Ovary (tissue), 10 donors: ENCODE measurements at regions of chr6 and their contacts with region 1.

Region 1: DNA sequence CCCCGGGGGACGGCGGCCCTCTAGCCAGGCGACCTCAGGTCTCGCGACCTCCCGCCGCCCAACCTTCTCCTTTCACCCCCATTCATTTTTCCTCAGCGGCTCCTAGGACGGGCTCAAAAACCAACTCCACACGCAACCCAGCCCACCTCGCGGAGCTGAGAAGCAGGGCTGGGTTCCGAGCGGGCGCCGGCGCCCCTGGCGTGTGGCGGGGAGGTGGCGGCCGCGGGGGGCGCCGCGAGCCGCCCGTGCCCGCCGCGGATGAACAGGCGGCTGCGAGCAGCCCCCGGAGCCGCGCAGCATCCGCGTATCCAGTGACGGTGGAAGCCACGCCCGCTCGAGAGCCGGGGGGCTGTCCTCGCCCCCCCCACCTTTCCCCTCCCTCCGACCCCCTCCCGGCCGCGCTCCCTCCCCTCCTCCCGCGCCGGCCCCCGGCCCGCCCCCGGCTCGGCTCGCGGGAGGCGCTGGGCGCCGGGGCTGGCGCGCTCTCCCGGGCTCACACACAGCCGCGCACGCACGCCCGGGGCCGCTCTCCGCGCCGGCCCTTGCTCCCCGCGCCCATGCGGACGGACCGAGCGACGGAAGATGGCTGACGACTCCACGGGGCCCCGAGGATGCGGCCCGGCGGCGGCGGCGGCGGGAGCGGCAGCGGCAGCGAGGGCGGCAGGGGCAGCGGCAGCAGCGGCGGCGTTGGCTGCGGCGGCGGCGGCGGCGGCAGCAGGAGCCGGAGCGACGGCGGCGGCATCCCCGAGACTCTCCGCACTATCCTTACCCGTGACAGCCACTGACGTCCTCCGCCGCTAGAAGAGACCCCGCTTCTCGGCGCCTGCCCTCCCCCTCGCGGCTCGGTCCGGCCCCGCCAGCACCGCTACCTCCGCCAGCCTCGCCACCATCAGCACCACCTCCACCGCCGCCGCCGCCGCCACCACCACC is at the start of gene SOBP:
- DNase-seq: peak; percentile 82 to 88 (median 88)
- H3K4me3 ChIP-seq: peak within 1 kb of the TSS; percentile 65
- H3K27ac ChIP-seq: peak within 1 kb of the TSS; percentile 83 to 87
- H3K4me1 ChIP-seq: peaks cover 5% of the 10 kb centered on the region
- H3K27me3 ChIP-seq: no peaks in the 10 kb centered on the region
- CTCF ChIP-seq: peak in 1 of 3 donors; percentile 33
- EP300 ChIP-seq: no peak
- POLR2A ChIP-seq: no peak
- total RNA-seq, gene SOBP: 8.7 to 31.3 (median 28.5) TPM

Region 2: GRCh38 chr6:107600936-107601335 is 111.0 kb after region 1 on chr6:
- intact Hi-C with region 1: loop called in 1 of 4 experiments (anchors 5 kb)
- DNase-seq: peak in 4 of 5 donors; percentile 39 to 52 (median 45)
- H3K4me3 ChIP-seq: no peak overlapping the region
- H3K27ac ChIP-seq: no peak overlapping the region
- H3K4me1 ChIP-seq: peaks cover 7% of the 10 kb centered on the region
- H3K27me3 ChIP-seq: no peaks in the 10 kb centered on the region
- CTCF ChIP-seq: no peak
- EP300 ChIP-seq: no peak
- POLR2A ChIP-seq: no peak